Heart right ventricle (tissue), 16 donors: ENCODE measurements at regions of chr1 and their contacts with region 1.

Region 1: DNA sequence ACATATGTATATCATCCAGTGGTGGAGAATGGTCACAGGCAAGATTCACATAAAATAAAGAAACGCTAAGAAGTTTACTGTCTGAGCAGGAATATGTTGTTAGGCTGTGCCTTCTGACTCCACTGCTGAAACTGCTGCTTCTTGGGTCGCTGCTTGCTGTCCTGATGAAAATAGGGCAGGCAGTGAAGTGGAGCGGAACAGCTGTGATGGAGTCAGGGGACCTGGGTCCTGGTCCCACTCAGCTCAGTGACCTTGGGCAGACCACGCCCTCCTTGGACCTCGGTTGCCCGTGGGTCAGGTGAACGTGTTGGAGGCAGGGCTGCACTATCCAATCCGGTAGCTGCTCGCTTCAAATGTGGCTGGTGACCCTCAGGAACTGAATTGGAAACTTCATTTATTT is 33.4 kb upstream of the IFFO2 start:
- DNase-seq: no peak
- ATAC-seq: no peak
- H3K4me3 ChIP-seq: no peak overlapping the region
- H3K27ac ChIP-seq: no peak overlapping the region
- H3K4me1 ChIP-seq: no peaks in the 10 kb centered on the region
- H3K27me3 ChIP-seq: peaks cover 0 to 25% (median 0%) of the 10 kb centered on the region in 7 donors
- CTCF ChIP-seq: no peak

Region 2: DNA sequence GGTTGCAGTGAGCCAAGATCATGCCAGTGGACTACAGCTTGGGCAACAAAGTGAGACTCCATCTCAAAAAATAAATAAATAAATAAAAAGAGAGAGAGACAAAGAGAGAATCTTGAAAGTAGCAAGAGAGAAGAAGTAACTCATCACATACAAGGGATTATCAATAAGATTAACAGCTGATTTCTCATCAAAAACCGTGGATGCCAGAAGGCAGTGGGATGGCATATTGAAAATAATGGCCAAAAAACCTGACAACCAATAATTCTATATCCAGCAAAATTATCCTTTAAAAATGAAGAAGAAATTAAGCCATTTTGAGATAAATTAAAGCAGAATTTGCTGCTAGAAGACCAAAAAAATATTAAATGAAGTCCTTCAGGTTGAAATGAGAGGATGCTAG is 473.4 kb before region 1 on chr1:
- intact Hi-C with region 1: no loop called
- DNase-seq: no peak
- ATAC-seq: no peak
- H3K4me3 ChIP-seq: no peak overlapping the region
- H3K27ac ChIP-seq: no peak overlapping the region
- H3K4me1 ChIP-seq: no peaks in the 10 kb centered on the region
- H3K27me3 ChIP-seq: peaks cover 0 to 23% (median 14%) of the 10 kb centered on the region in 7 donors
- CTCF ChIP-seq: no peak

Region 3: DNA sequence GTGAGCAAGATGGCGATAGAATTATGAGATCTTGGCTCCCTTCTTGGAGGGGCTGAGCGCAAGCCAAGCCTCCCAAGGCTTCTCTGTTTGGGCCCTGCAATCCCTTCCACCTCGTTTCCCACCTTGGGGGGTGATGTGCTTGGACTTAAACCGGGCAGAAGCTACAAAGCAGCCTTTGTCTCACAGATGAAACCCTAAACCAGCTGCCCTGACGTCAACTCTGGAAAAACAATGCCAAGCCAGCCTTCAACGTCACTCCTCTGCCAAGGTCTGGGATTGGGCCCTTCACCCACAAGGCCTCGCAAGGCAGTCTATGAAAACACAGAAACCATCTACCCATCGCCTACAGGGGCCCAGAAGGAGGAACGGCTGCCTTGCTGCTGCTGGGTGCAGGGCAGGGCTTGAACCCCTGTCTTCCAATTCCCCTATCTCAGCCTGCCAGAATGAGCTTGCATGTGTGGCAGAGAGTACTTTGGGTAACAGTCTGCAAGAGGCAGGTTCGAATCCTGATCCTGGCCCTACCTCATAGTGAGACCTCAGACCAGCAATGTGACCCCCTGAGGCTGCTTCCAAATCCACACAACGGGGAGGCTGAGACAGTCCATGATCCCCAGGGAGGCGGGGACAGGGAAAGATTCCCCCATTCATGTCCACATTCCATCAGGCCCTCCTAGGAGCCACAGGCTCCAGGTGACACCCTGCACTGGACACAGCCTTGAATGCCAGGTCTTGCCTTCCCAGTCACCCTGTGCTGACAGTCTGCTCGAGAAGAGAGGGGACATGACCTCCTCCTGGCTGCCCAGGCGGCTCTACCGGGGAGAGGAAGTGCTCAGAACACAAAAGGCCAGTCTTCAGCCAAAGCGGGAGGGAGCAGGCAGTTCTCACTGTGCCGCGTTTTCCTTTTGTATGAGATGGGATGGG is 48.4 kb before region 1 on chr1:
- intact Hi-C with region 1: no loop called
- DNase-seq: peak in 1 of 2 donors; percentile 56
- ATAC-seq: peak in 7 of 8 donors; percentile 42 to 80 (median 78)
- H3K4me3 ChIP-seq: no peak overlapping the region
- H3K27ac ChIP-seq: peak overlapping the region; percentile 14 to 82 (median 66)
- H3K4me1 ChIP-seq: peaks cover 36 to 85% (median 66%) of the 10 kb centered on the region in 9 donors
- H3K27me3 ChIP-seq: no peaks in the 10 kb centered on the region
- CTCF ChIP-seq: no peak

Region 4: DNA sequence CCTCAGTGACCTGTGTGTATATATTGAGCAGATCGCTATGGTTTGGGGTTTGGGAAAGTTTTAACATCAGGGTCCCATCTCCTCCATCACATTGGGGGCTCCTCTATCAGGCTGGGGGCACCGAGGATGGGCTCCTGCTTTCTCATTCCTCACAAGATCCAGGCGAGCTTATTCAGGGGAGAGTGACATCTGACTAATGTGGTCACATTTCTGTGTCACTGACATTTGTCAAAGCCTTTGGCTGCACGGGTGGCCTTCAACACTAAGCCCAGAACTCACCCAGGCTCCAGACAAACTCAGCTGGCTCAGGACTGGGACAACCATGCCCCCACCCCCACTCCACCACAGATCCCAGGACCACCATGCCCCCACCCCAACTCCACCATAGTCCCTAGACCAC is 69.9 kb after region 1 on chr1:
- intact Hi-C with region 1: loop called in 1 of 10 experiments (anchors 1 kb)
- DNase-seq: no peak
- ATAC-seq: no peak
- H3K4me3 ChIP-seq: no peak overlapping the region
- H3K27ac ChIP-seq: no peak overlapping the region
- H3K4me1 ChIP-seq: peaks cover 0 to 13% (median 3%) of the 10 kb centered on the region in 9 donors
- H3K27me3 ChIP-seq: peaks cover 0 to 43% (median 30%) of the 10 kb centered on the region in 7 donors
- CTCF ChIP-seq: no peak